ENCODE measurements at regions of chr21 and their contacts with region 1.

Region 1: GRCh38 chr21:30831194-30831765 is 1.7 kb upstream of the KRTAP7-1 start:
- DNase-seq: peak in 1 of 2 donors; percentile 66
- ATAC-seq: no peak
- H3K4me3 ChIP-seq: no peak overlapping the region
- H3K4me3 Mint-ChIP-seq: no peak overlapping the region
- H3K27ac ChIP-seq: no peak overlapping the region
- H3K27ac Mint-ChIP-seq: no peak overlapping the region
- H3K4me1 ChIP-seq: no peaks in the 10 kb centered on the region
- H3K4me1 Mint-ChIP-seq: no peaks in the 10 kb centered on the region
- H3K27me3 ChIP-seq: no peaks in the 10 kb centered on the region
- H3K27me3 Mint-ChIP-seq: no peaks in the 10 kb centered on the region
- CTCF ChIP-seq: peak; percentile 59

Region 2: DNA sequence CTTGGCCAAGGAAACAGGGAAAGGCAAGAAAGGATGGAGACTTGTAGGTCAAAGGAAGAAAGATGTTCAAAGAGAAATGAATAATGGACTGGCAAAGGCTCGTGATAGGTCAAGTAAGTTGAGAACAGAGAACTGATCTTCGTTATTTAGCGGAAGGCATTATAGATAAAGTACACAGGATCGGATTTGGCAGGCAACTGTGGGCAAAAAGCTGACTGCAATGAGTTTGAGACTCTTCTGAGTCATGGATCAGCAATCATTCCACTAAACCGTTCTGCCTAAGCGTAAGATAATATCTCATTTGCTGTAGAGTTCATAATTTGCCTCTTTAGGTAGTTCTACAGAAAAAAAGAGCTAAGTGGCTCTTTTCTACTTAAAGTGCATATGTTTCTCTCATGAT is 146.8 kb before region 1 on chr21:
- intact Hi-C with region 1: no loop called
- DNase-seq: no peak
- ATAC-seq: no peak
- H3K4me3 ChIP-seq: no peak overlapping the region
- H3K4me3 Mint-ChIP-seq: no peak overlapping the region
- H3K27ac ChIP-seq: no peak overlapping the region
- H3K27ac Mint-ChIP-seq: no peak overlapping the region
- H3K4me1 ChIP-seq: no peaks in the 10 kb centered on the region
- H3K4me1 Mint-ChIP-seq: no peaks in the 10 kb centered on the region
- H3K27me3 ChIP-seq: no peaks in the 10 kb centered on the region
- H3K27me3 Mint-ChIP-seq: no peaks in the 10 kb centered on the region
- CTCF ChIP-seq: no peak

Region 3: DNA sequence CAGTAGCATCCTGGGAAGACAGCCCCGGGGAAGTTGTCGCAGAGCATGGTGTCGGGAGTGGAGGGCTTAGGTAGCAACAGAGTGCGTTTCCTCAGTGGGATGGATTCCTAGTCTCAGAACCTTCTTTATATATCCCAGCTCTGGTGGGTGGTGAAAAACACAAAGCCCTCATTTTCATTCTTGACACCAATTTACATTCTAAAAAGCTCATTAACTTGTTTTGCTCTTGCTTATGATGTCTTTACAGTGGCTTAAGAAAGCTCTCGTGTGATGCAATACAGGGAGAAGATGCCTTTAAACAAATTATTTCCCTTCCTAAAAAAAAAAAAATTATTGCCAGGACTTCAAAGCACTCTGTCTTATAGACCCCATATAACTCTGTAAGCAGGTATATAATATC is 18.1 kb before region 1 on chr21 and contains the start of gene KRTAP8-1:
- intact Hi-C with region 1: no loop called
- DNase-seq: no peak
- ATAC-seq: no peak
- H3K4me3 ChIP-seq: no peak within 1 kb of the TSS
- H3K4me3 Mint-ChIP-seq: no peak within 1 kb of the TSS
- H3K27ac ChIP-seq: no peak within 1 kb of the TSS
- H3K27ac Mint-ChIP-seq: no peak within 1 kb of the TSS
- H3K4me1 ChIP-seq: no peaks in the 10 kb centered on the region
- H3K4me1 Mint-ChIP-seq: no peaks in the 10 kb centered on the region
- H3K27me3 ChIP-seq: no peaks in the 10 kb centered on the region
- H3K27me3 Mint-ChIP-seq: no peaks in the 10 kb centered on the region
- CTCF ChIP-seq: no peak
- total RNA-seq, gene KRTAP8-1: not detected

Region 4: DNA sequence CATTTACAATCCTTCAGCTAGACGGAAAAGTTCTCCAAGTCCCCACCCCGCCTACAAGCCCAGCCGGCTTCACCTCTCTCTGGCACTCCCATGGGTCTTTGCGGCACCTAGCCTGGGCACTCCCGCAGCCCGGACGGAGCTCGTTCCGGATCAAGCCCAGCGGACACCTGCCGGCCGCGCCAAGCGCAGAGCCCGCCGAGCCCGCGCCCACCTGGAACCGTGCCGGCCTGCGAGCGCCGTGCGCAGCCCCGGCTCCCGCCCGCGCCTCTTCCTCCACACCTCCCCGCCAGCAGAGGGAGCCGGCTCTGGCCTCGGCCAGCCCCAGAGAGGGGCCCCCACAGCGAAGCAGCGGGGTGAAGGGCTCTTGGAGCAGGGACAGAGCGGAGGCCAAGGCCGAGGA is 257.0 kb after region 1 on chr21:
- intact Hi-C with region 1: loop called (anchors 1 kb)
- DNase-seq: no peak
- ATAC-seq: no peak
- H3K4me3 ChIP-seq: no peak overlapping the region
- H3K4me3 Mint-ChIP-seq: no peak overlapping the region
- H3K27ac ChIP-seq: no peak overlapping the region
- H3K27ac Mint-ChIP-seq: no peak overlapping the region
- H3K4me1 ChIP-seq: no peaks in the 10 kb centered on the region
- H3K4me1 Mint-ChIP-seq: peaks cover 0 to 6% of the 10 kb centered on the region in 2 donors
- H3K27me3 ChIP-seq: peaks cover 2% of the 10 kb centered on the region
- H3K27me3 Mint-ChIP-seq: peaks cover 12 to 30% of the 10 kb centered on the region in 2 donors
- CTCF ChIP-seq: no peak